AG04449 (cell line): ENCODE measurements at regions of chr22 and their contacts with region 1.

Region 1: DNA sequence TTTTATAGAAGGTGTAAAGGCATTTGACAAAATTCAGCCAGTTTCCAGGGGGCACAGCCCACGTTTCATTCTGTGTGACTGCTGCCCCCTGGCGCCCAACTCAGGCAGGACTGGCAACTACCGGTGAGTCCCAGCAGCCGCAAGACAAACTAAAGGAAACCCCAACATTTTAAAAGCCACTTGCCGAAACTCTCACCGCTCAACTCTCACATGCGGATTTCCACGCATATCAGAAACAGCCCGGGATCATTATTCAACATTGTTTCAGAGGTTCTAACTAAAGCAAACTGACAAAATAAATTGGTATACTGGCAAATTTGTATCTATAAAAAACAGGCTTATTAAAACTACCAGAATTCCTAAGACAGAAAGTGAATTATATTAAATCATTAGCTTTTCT is 48.2 kb downstream of the MORC2 start:
- DNase-seq: no peak
- H3K4me3 ChIP-seq: no peak overlapping the region
- CTCF ChIP-seq: peak; percentile 89

Region 2: DNA sequence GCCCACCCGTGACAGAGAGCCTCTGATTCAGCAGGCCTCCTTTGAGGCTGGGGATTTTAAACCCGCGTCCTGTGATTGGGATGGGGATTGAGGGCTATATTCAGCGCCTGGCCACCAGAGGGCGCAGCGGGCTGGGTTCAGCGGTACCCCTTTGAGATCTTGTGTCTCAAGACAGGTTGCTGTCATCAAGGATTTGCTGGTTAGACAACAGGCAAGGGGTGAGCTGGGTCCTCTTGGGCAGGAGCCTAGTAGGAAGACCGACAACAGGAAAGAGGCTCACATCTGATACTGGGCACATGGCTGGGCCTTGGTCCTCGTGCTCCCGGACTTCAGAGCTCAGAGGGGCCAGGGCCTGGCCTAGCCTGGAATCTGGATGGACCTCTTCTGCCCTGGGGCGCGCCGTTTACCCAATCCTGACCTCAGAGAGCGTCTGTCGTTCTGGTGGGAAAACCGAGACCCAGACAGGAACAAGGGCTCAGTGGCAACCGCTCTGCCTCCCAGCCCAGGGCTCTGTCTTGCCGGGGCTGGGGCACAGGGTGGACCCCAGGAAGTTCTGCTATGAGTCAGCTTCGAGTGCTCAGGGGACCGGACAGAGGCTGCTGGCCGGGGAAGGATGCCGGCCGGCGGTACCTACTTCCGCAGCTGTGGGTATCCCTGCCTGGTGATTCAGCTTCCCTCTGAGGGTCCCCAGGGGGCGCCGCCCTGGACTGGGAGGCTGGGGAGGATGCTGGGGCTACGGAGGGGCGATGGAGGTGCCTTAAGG is 285.8 kb before region 1 on chr22:
- CTCF ChIA-PET with region 1: interaction called, 32 read pairs
- POLR2A ChIA-PET with region 1: interaction called, 3 read pairs
- DNase-seq: peak; percentile 54
- H3K4me3 ChIP-seq: peak overlapping the region; percentile 42
- CTCF ChIP-seq: peak; percentile 92

Region 3: DNA sequence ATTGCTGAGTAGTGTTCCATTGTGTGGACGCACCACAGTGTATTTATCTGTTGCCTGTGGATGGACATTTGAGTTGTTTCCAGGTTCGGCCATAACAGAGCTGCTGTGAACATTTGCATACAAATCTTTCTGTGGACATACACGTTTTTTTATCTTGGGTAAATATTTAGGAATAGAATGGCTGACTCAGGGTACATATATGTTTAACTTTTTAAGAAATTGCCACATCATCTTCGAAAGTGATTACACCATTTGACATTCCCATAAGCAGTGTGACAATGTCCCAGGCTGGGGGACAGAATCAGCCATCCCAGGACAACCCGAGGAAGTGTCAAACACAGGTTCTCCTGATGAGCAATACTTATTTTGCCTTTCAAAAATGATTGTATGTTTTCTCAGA is 137.8 kb before region 1 on chr22:
- CTCF ChIA-PET with region 1: interaction called, 15 read pairs
- POLR2A ChIA-PET with region 1: no interaction called
- DNase-seq: no peak
- H3K4me3 ChIP-seq: no peak overlapping the region
- CTCF ChIP-seq: no peak

Region 4: DNA sequence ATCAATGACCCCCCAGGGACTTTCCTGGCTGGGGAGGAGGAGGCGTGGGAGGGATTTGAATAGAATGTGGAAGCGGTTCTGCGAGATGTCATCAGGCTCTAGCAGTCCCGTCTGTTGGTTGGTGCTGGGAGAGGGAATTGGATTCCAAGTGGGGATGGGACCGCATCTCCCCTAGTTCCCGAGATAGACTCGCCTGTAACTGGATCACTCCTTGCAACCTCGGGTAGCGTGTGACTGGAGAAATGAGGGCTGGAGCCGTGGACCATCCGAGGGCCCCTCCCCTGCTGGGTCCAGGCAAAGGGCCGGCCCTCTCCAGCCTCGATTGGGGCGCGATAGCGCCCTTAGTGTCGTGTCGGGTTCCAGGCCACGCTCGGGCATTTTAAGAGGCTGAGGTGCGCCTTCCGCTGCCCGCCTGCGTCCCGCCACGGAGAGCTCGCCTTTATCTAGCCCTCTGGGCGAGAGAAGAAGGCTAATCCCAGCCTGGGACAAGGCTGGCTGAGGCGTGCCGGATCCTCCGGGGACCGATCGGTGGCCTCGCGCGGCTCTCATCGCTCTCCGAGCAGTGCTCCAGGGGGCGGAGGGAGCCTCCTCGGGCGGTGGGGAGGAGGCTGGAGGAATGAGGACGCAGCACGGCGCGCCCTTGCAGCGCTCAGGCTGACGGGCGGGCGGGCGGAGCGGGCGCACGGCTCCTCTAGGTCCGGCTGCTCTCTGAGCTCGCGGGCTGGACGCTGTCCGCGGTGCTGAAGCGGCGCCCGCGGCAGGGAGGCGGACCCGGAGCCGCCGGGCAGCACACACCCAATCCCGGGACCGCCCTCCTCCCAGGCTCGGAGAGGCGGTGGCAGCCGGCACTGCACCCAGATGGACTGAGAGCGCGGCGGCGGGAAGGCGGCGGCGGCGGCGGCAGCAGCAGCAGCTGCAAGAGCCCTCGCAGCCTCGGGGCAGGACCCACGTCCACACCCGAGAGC is 117.9 kb before region 1 on chr22:
- CTCF ChIA-PET with region 1: interaction called, 12 read pairs
- POLR2A ChIA-PET with region 1: no interaction called
- DNase-seq: peak; percentile 24
- H3K4me3 ChIP-seq: peak overlapping the region; percentile 40
- CTCF ChIP-seq: peak; percentile 50

Region 5: DNA sequence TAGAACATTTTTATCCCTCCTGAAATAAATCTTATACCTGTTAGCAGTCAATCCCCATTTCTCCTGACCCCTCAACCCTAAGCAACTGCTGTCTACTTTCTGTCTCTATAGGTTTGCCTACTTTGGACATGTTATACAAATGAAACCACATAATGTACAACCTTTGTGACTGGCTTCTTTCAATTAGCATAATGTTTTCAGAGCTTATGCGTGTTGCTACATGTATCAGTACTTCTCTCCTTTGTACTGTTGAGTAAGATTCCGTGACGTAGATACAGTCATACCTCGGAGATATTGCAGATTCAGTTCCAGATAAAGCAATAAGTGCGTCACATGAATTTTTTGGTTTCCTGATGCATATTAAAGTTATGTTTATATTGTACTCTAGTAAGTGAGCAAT is 79.1 kb before region 1 on chr22:
- CTCF ChIA-PET with region 1: no interaction called
- POLR2A ChIA-PET with region 1: no interaction called
- DNase-seq: no peak
- H3K4me3 ChIP-seq: no peak overlapping the region
- CTCF ChIP-seq: no peak

Region 6: GRCh38 chr22:30905696-30906341 is 14.6 kb before region 1 on chr22:
- CTCF ChIA-PET with region 1: interaction called, 56 read pairs
- POLR2A ChIA-PET with region 1: interaction called, 3 read pairs
- DNase-seq: no peak
- H3K4me3 ChIP-seq: no peak overlapping the region
- CTCF ChIP-seq: no peak

Region 7: GRCh38 chr22:30940685-30941362 is 20.4 kb after region 1 on chr22:
- CTCF ChIA-PET with region 1: interaction called, 30 read pairs
- POLR2A ChIA-PET with region 1: interaction called, 3 read pairs
- DNase-seq: no peak
- H3K4me3 ChIP-seq: no peak overlapping the region
- CTCF ChIP-seq: no peak